Activated CD8-positive, alpha-beta T cell treated with anti-CD3 and anti-CD28 coated beads for 36 hours (primary cell): ENCODE measurements at regions of chr19 and their contacts with region 1.

Region 1: DNA sequence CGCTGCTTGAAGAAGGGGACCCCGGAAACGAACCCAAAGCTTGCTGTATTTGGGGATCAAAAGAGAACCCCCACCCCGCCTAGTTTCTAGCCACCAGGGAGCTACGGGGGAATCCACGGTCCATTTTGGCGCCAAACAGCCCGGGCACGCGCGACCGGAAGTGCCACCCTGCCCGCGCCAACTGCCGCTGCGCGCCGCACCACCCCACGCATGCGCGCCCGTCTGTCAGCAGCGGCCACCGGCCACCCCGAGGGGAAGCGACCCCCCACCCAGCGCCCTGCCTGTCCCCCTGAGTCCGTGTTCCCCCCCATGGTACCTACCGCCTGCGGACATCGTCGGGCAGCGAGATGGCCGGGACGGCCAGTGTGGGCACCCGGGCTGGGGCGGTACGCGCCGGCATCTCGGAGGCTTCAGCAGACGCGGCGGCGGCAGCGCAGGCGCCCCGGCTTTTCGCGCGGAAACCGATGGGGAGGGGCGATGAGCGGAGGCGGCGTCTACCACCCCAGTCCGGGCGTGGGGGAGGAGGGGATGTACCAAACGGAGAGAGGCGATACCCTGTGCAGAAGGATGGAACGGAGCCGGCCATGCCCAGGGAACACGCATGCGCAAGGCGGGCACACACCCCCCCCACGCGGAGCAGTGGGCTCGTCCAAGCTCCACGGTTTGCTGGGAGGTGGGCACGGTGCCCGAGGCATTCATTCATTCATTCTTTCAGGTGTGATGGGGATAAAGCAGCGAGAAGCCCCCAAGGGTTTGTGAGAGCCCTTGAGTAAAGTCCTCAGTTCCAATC is at the start of gene DNMT1:
- DNase-seq: peak; percentile 99
- ATAC-seq: peak; percentile 96
- H3K4me3 Mint-ChIP-seq: peak within 1 kb of the TSS; percentile 94
- H3K27ac Mint-ChIP-seq: peak within 1 kb of the TSS; percentile 97
- H3K4me1 Mint-ChIP-seq: peaks cover 42% of the 10 kb centered on the region
- H3K27me3 Mint-ChIP-seq: no peaks in the 10 kb centered on the region
- CTCF ChIP-seq: no peak
- total RNA-seq, gene DNMT1: 372 to 379 TPM

Region 2: GRCh38 chr19:10184636-10185035 is 10.1 kb before region 1 on chr19:
- CTCF ChIA-PET with region 1: no interaction called
- POLR2A ChIA-PET with region 1: interaction called, 10 read pairs
- intact Hi-C with region 1: no loop called
- DNase-seq: no peak
- ATAC-seq: no peak
- H3K4me3 Mint-ChIP-seq: no peak overlapping the region
- H3K27ac Mint-ChIP-seq: no peak overlapping the region
- H3K4me1 Mint-ChIP-seq: peaks cover 26% of the 10 kb centered on the region
- H3K27me3 Mint-ChIP-seq: no peaks in the 10 kb centered on the region
- CTCF ChIP-seq: no peak